ENCODE measurements at regions of chr1 and their contacts with region 1.

Region 1: DNA sequence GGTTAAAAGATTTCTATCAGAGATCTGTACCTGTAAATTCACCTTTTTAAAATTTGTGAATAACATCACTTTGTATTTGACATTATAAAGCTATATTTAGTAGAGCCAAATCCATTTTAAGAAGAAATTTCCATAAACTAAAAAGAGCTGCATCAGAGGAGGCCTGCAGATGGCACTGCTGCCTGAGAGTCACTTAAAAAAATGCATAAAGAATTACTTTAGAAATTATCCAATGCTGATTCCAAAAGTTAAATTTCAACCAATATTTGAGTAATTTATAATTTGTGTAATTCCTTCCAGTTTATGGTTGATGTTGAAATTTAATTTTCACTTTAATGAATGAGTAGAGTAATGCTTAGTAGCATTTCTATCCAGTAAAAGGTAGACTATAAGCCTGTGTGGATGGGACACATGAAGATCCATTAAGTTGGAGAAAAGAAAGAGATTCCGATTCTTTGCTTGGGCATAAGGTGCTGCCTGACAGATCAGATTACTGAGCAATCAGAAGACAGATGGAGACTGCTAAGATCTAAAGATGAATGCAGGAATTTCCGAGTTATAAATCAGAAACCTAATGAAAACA is 20.7 kb upstream of the RPE65 start:
- DNase-seq: peak; percentile 23
- H3K4me3 Mint-ChIP-seq: no peak overlapping the region
- H3K27ac Mint-ChIP-seq: no peak overlapping the region
- H3K4me1 Mint-ChIP-seq: no peaks in the 10 kb centered on the region
- H3K27me3 Mint-ChIP-seq: no peaks in the 10 kb centered on the region
- CTCF ChIP-seq: peak; percentile 65

Region 2: GRCh38 chr1:68459796-68460195 is 10.7 kb before region 1 on chr1:
- CTCF ChIA-PET with region 1: interaction called, 11 read pairs
- POLR2A ChIA-PET with region 1: interaction called, 3 read pairs
- intact Hi-C with region 1: no loop called
- DNase-seq: no peak
- H3K4me3 Mint-ChIP-seq: no peak overlapping the region
- H3K27ac Mint-ChIP-seq: no peak overlapping the region
- H3K4me1 Mint-ChIP-seq: no peaks in the 10 kb centered on the region
- H3K27me3 Mint-ChIP-seq: no peaks in the 10 kb centered on the region
- CTCF ChIP-seq: no peak

Region 3: DNA sequence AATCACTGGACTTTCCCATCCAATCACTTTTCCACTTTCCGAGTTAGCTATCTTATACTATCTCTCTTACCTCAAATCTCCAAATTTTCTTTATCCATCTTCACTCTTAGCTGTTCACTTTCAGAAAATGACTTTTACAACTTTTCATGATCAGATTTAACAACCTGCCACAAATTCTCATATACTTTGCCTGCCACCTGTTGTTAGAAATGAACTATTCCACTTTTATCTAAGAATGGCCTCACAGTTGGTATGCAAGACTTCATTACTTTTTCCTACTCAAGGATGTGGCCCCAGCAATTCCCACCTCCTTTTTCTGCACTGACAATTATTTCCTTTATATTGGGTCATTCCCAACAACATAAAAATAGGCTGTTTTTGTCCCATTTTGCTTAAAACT is 120.0 kb after region 1 on chr1:
- CTCF ChIA-PET with region 1: interaction called, 14 read pairs
- POLR2A ChIA-PET with region 1: interaction called, 3 read pairs
- intact Hi-C with region 1: loop called (anchors 1 kb)
- DNase-seq: peak; percentile 11
- H3K4me3 Mint-ChIP-seq: no peak overlapping the region
- H3K27ac Mint-ChIP-seq: no peak overlapping the region
- H3K4me1 Mint-ChIP-seq: no peaks in the 10 kb centered on the region
- H3K27me3 Mint-ChIP-seq: peaks cover 45% of the 10 kb centered on the region
- CTCF ChIP-seq: no peak

Measured in MCF 10A (cell line).